ENCODE measurements at regions of chr19 and their contacts with region 1.

Region 1: DNA sequence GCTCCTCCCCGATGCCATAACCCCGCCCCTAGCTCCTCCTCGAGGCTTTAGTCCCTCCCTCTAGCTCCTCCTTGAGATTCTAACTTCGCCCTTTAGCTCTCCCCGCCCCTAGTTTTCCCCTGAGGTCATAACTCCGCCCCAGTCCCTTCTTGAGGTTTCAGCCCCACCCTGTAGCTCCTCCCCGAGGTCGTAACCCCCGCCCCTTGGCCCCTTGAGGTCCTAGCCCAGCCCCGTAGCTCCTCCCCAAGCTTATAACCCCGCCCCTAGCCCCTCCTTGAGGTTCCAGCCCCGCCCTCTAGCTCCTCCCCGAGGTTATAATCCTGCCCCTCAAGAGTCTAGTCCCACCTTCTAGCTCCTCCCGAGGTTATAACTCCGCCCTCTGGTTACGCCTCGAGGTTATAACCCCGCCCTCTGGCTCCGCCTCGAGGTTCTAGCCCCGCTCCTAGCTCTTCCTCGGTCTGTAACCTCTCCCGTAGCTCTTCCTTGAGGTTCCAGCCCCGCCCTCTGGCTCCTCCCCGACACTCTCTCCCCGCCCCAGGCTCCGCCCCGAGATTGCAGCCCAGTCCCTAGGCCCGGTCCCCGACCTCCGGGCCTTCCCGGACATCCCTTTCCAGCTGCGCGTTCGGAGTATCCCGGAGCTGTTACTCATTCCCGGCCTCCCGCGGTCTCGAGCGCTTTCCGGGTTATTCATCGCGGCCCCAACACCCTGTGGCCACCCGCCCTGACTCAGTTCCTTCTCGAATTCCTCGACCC is 1.4 kb downstream of the PLAUR start:
- DNase-seq: peak; percentile 87 to 98 (median 95)
- ATAC-seq: peak; percentile 82 to 87 (median 85)
- H3K4me3 ChIP-seq: peak overlapping the region; percentile 58 to 64
- H3K4me3 Mint-ChIP-seq: peak overlapping the region; percentile 82 to 87 (median 84)
- H3K27ac ChIP-seq: peak overlapping the region; percentile 22
- H3K27ac Mint-ChIP-seq: peak overlapping the region; percentile 76 to 79
- H3K4me1 ChIP-seq: peaks cover 26 to 53% of the 10 kb centered on the region in 2 experiments
- H3K4me1 Mint-ChIP-seq: peaks cover 42 to 50% (median 49%) of the 10 kb centered on the region in 3 donors
- H3K27me3 ChIP-seq: peaks cover 0 to 6% of the 10 kb centered on the region in 2 experiments
- H3K27me3 Mint-ChIP-seq: no peaks in the 10 kb centered on the region

Region 2: DNA sequence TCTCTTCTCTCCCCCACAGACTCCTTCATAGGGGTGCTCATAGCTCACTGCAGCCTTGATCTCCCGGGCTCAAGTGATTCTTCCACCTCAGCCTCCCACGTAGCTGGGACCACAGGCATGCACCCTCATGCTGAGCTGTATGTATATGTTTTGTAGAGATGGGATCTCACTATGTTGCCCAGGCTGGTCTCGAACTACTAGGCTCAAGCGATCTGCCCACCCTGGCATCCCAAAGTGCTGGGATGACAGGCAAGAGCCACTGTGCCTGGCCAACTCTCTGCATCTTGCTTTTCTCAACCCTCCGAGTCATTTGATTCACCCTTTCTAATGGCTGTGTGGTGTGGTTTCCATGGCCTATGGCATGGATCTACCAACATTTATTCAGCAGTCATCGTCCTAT is 37.1 kb after region 1 on chr19:
- CTCF ChIA-PET with region 1: interaction called in 1 of 2 experiments, 10 read pairs
- POLR2A ChIA-PET with region 1: no interaction called
- DNase-seq: no peak
- ATAC-seq: no peak
- H3K4me3 ChIP-seq: no peak overlapping the region
- H3K4me3 Mint-ChIP-seq: no peak overlapping the region
- H3K27ac ChIP-seq: no peak overlapping the region
- H3K27ac Mint-ChIP-seq: no peak overlapping the region
- H3K4me1 ChIP-seq: peaks cover 0 to 6% of the 10 kb centered on the region in 2 experiments
- H3K4me1 Mint-ChIP-seq: peaks cover 10 to 12% (median 12%) of the 10 kb centered on the region in 3 donors
- H3K27me3 ChIP-seq: peaks cover 0 to 7% of the 10 kb centered on the region in 2 experiments
- H3K27me3 Mint-ChIP-seq: peaks cover 6% of the 10 kb centered on the region in 2 donors

Region 3: GRCh38 chr19:43723588-43723987 is 55.0 kb after region 1 on chr19:
- CTCF ChIA-PET with region 1: interaction called in 1 of 2 experiments, 18 read pairs
- POLR2A ChIA-PET with region 1: interaction called in 1 of 2 experiments, 5 read pairs
- DNase-seq: no peak
- ATAC-seq: no peak
- H3K4me3 ChIP-seq: no peak overlapping the region
- H3K4me3 Mint-ChIP-seq: no peak overlapping the region
- H3K27ac ChIP-seq: no peak overlapping the region
- H3K27ac Mint-ChIP-seq: no peak overlapping the region
- H3K4me1 ChIP-seq: no peaks in the 10 kb centered on the region
- H3K4me1 Mint-ChIP-seq: peaks cover 0 to 9% (median 7%) of the 10 kb centered on the region in 3 donors
- H3K27me3 ChIP-seq: peaks cover 0 to 16% of the 10 kb centered on the region in 2 experiments
- H3K27me3 Mint-ChIP-seq: no peaks in the 10 kb centered on the region

Region 4: DNA sequence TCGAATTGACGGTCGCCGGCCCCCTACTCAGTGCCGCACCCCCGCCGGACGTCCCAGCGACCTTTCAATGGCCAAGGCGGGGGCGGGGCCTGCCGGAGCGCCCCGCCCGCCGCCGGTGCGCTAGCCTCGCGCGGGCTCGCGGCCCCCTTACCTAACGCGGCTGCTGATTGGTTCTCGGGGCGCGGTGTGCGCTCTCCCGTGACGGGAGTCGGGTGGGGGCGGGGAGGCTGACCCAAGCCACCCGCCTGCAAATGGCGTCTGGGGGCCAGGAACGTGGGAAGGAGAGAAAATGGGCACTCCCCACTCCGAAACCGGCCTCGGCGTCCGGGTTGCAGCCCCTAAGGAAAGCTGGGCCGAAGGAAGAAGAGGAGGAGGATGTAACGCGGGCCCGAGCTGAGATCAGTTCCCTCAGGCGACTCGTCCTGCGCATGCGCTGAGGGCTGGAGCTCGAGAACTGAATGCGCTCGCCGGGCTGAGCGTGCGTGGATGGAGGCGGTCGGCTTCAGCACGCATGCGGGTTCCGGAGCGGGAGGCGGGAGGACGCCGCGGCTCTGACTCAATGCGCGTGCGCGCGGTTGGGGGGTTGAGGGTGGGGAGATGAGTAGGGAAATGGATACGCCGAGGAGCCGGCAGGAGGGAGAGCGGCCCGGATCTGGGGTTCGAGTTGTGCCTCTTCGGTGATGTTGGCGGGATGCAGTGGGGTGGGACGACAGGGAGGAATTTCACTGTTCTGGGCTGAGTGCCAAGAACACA is 86.1 kb after region 1 on chr19 and contains the start of gene SMG9:
- CTCF ChIA-PET with region 1: interaction called, 4 to 13 read pairs
- POLR2A ChIA-PET with region 1: interaction called in 1 of 2 experiments, 4 read pairs
- DNase-seq: peak; percentile 96 to 100 (median 98)
- ATAC-seq: peak; percentile 85 to 90 (median 88)
- H3K4me3 ChIP-seq: peak within 1 kb of the TSS; percentile 75 to 91
- H3K4me3 Mint-ChIP-seq: peak within 1 kb of the TSS; percentile 94 to 98 (median 98)
- H3K27ac ChIP-seq: peak within 1 kb of the TSS; percentile 95
- H3K27ac Mint-ChIP-seq: peak within 1 kb of the TSS; percentile 97 to 98
- H3K4me1 ChIP-seq: peaks cover 2 to 35% of the 10 kb centered on the region in 2 experiments
- H3K4me1 Mint-ChIP-seq: peaks cover 38 to 58% (median 45%) of the 10 kb centered on the region in 3 donors
- H3K27me3 ChIP-seq: no peaks in the 10 kb centered on the region
- H3K27me3 Mint-ChIP-seq: no peaks in the 10 kb centered on the region
- total RNA-seq, gene SMG9: 50.3 to 64.3 (median 56.8) TPM

Region 5: GRCh38 chr19:43809762-43810696 is 141.4 kb after region 1 on chr19:
- CTCF ChIA-PET with region 1: interaction called in 1 of 2 experiments, 10 read pairs
- POLR2A ChIA-PET with region 1: no interaction called
- DNase-seq: peak in 1 of 35 experiments; percentile 72
- ATAC-seq: peak; percentile 45 to 65 (median 60)
- H3K4me3 ChIP-seq: no peak overlapping the region
- H3K4me3 Mint-ChIP-seq: no peak overlapping the region
- H3K27ac ChIP-seq: no peak overlapping the region
- H3K27ac Mint-ChIP-seq: no peak overlapping the region
- H3K4me1 ChIP-seq: no peaks in the 10 kb centered on the region
- H3K4me1 Mint-ChIP-seq: peaks cover 0 to 7% (median 0%) of the 10 kb centered on the region in 3 donors
- H3K27me3 ChIP-seq: peaks cover 0 to 9% of the 10 kb centered on the region in 2 experiments
- H3K27me3 Mint-ChIP-seq: peaks cover 9 to 14% of the 10 kb centered on the region in 2 donors